ENCODE measurements at regions of chr12 and their contacts with region 1.

Region 1: GRCh38 chr12:113980537-113981337 is 14.6 kb upstream of the RBM19 start:
- DNase-seq: peak in 4 of 9 experiments; percentile 11 to 61 (median 32)
- ATAC-seq: no peak
- H3K4me3 ChIP-seq: no peak overlapping the region
- H3K4me3 Mint-ChIP-seq: no peak overlapping the region
- H3K27ac ChIP-seq: no peak overlapping the region
- H3K27ac Mint-ChIP-seq: no peak overlapping the region
- H3K4me1 ChIP-seq: no peaks in the 10 kb centered on the region
- H3K4me1 Mint-ChIP-seq: no peaks in the 10 kb centered on the region
- H3K27me3 ChIP-seq: no peaks in the 10 kb centered on the region
- H3K27me3 Mint-ChIP-seq: peaks cover 24% of the 10 kb centered on the region
- CTCF ChIP-seq: peak; percentile 60

Region 2: DNA sequence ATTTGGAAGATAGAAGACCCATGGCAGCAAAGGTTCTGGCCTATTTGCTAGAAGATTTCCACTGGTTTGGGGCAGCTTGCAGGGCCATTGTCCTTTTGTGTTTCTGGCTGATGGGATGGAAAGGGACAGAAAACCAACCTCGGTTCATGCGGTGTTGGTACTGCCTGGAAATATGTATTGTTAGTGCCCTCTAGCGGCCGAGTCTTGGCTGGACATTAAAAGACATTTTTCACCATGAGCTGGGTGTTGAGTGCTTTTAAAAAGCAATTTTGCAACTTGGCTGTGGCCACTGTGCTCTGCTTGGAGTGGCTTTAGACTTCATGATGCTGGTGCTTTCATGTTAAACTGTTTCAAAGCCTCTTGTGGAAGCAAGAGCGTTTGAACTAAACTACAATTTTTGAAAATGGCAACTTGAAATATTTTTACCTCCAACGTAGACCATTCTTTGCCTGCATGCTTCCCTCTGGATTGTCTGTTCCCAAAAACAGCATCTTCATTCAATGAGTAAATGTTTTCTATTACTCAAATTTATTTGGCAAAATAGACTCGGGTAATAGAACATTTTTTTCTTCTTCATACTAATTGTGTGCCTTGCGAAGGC is 527.9 kb after region 1 on chr12:
- CTCF ChIA-PET with region 1: interaction called, 18 read pairs
- POLR2A ChIA-PET with region 1: no interaction called
- intact Hi-C with region 1: loop called (anchors 1 kb)
- DNase-seq: peak; percentile 16 to 69 (median 50)
- ATAC-seq: no peak
- H3K4me3 ChIP-seq: no peak overlapping the region
- H3K4me3 Mint-ChIP-seq: no peak overlapping the region
- H3K27ac ChIP-seq: no peak overlapping the region
- H3K27ac Mint-ChIP-seq: no peak overlapping the region
- H3K4me1 ChIP-seq: no peaks in the 10 kb centered on the region
- H3K4me1 Mint-ChIP-seq: no peaks in the 10 kb centered on the region
- H3K27me3 ChIP-seq: no peaks in the 10 kb centered on the region
- H3K27me3 Mint-ChIP-seq: peaks cover 15% of the 10 kb centered on the region
- CTCF ChIP-seq: peak; percentile 63

Region 3: DNA sequence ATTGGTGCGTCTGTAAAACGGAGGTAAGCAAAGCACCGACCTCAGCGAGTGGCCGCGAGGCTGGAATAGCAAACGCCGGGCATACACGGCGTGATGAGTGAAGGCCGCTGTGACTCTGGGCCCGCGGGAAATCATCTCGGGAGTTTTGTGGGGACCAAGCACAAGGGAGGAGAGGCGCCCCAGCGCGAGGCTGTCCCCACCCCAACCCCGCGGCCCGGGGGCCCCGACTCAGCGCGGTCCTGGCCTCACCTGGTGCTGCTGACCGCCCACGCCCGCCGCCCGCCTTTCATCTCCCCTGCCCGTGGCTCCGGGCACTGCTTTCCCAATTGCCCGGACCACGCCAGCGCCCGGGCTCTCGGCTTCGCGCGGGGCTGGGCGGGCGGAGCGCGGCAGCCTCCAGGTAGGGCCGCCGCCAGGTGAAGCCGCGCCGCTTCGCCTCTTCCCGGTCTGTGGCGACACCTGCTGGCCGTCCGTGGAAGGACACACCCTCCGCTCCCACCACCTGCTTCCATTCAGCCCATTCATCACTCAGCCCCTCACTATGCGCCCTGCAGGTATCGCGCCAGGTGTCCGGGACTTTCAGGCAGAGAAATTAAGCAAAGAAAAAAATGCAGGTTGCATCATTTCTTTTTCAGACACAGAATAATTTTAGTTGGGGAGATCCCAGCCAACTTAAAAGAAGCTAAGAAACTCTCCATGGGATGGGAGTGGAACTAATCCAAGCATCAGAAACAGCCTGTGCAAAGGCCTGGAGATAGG is 1936.4 kb after region 1 on chr12:
- CTCF ChIA-PET with region 1: interaction called, 15 read pairs
- POLR2A ChIA-PET with region 1: no interaction called
- intact Hi-C with region 1: loop called (anchors 2 kb)
- DNase-seq: peak; percentile 48 to 84 (median 70)
- ATAC-seq: peak; percentile 84
- H3K4me3 ChIP-seq: no peak overlapping the region
- H3K4me3 Mint-ChIP-seq: peak overlapping the region; percentile 13
- H3K27ac ChIP-seq: no peak overlapping the region
- H3K27ac Mint-ChIP-seq: no peak overlapping the region
- H3K4me1 ChIP-seq: no peaks in the 10 kb centered on the region
- H3K4me1 Mint-ChIP-seq: peaks cover 5% of the 10 kb centered on the region
- H3K27me3 ChIP-seq: peaks cover 4 to 11% of the 10 kb centered on the region in 2 experiments
- H3K27me3 Mint-ChIP-seq: peaks cover 67% of the 10 kb centered on the region
- CTCF ChIP-seq: peak; percentile 99

Measured in CD8-positive, alpha-beta T cell (primary cell).